CD8-positive, alpha-beta T cell (primary cell): ENCODE measurements at regions of chr1 and their contacts with region 1.

Region 1: GRCh38 chr1:156282479-156283222 is at the start of gene SMG5:
- DNase-seq: peak; percentile 89 to 99 (median 95)
- ATAC-seq: peak; percentile 91
- H3K4me3 ChIP-seq: peak within 1 kb of the TSS; percentile 62 to 80
- H3K4me3 Mint-ChIP-seq: peak within 1 kb of the TSS; percentile 93
- H3K27ac ChIP-seq: peak within 1 kb of the TSS; percentile 38 to 87
- H3K27ac Mint-ChIP-seq: peak within 1 kb of the TSS; percentile 91
- H3K4me1 ChIP-seq: peaks cover 28% of the 10 kb centered on the region
- H3K4me1 Mint-ChIP-seq: peaks cover 38% of the 10 kb centered on the region
- H3K27me3 ChIP-seq: no peaks in the 10 kb centered on the region
- H3K27me3 Mint-ChIP-seq: no peaks in the 10 kb centered on the region
- CTCF ChIP-seq: no peak
- total RNA-seq, gene SMG5: 68.9 to 70.2 TPM

Region 2: GRCh38 chr1:155744711-155745283 is 537.9 kb before region 1 on chr1:
- CTCF ChIA-PET with region 1: no interaction called
- POLR2A ChIA-PET with region 1: no interaction called
- intact Hi-C with region 1: loop called in 1 of 2 experiments (anchors 5 kb)
- DNase-seq: no peak
- ATAC-seq: no peak
- H3K4me3 ChIP-seq: peak overlapping the region; percentile 62 to 86
- H3K4me3 Mint-ChIP-seq: peak overlapping the region; percentile 94
- H3K27ac ChIP-seq: peak overlapping the region; percentile 64 to 70
- H3K27ac Mint-ChIP-seq: peak overlapping the region; percentile 95
- H3K4me1 ChIP-seq: peaks cover 6% of the 10 kb centered on the region
- H3K4me1 Mint-ChIP-seq: peaks cover 3% of the 10 kb centered on the region
- H3K27me3 ChIP-seq: no peaks in the 10 kb centered on the region
- H3K27me3 Mint-ChIP-seq: no peaks in the 10 kb centered on the region
- CTCF ChIP-seq: no peak

Region 3: DNA sequence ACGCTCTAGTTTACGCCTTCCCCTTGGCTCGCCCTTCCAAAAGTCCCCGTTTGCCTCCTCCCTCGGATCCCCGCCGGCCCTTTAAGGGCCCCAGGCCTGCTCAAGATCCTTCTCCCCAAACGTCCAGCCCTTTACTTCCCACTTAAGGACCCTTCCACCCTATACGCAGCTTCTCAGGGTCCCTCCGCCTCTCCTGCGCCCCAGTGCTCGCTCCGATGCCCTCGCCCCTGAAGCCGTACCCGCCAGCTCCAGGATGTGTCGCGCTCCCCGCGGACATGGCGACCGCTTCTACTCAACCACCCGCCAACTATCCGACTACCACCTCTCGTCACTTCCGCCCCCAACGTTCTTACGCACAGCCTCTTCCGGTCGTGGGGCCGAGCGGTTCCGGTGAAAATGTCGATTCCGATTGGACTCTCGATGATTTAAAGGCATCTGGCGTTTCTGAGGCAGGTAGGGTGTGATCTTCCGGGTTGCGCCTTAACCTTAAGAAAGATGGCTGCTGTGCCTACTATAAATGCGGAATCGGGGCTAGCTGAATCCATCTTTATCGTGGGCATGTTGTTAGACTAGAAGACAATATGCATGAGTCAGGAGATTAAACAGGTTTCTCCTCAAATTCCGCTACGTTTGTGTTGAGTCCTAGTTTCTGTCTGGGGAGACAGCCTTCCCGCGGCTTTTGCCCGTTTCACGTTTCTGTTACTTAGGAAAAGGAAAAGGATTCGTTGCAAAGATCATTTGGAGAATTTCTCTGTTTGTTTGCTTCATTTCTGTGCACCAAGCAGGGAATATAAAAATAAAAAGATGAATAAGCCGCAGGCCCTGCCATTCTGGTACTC is 348.3 kb before region 1 on chr1 and contains the start of gene KHDC4:
- CTCF ChIA-PET with region 1: no interaction called
- POLR2A ChIA-PET with region 1: no interaction called
- intact Hi-C with region 1: loop called in 1 of 2 experiments (anchors 1 kb)
- DNase-seq: peak; percentile 88 to 100 (median 93)
- ATAC-seq: peak; percentile 92
- H3K4me3 ChIP-seq: peak within 1 kb of the TSS; percentile 83 to 96
- H3K4me3 Mint-ChIP-seq: no peak within 1 kb of the TSS
- H3K27ac ChIP-seq: peak within 1 kb of the TSS; percentile 89 to 98
- H3K27ac Mint-ChIP-seq: no peak within 1 kb of the TSS
- H3K4me1 ChIP-seq: peaks cover 39% of the 10 kb centered on the region
- H3K4me1 Mint-ChIP-seq: peaks cover 34% of the 10 kb centered on the region
- H3K27me3 ChIP-seq: no peaks in the 10 kb centered on the region
- H3K27me3 Mint-ChIP-seq: no peaks in the 10 kb centered on the region
- CTCF ChIP-seq: peak; percentile 32
- total RNA-seq, gene KHDC4: 47.4 to 54.6 TPM

Region 4: GRCh38 chr1:156082309-156083091 is 200.2 kb before region 1 on chr1 and contains the start of gene MEX3A:
- CTCF ChIA-PET with region 1: no interaction called
- POLR2A ChIA-PET with region 1: no interaction called
- intact Hi-C with region 1: loop called in 1 of 2 experiments (anchors 1 kb)
- DNase-seq: peak in 8 of 9 experiments; percentile 39 to 73 (median 64)
- ATAC-seq: peak; percentile 90
- H3K4me3 ChIP-seq: peak within 1 kb of the TSS; percentile 65 to 88
- H3K4me3 Mint-ChIP-seq: peak within 1 kb of the TSS; percentile 87
- H3K27ac ChIP-seq: no peak within 1 kb of the TSS
- H3K27ac Mint-ChIP-seq: no peak within 1 kb of the TSS
- H3K4me1 ChIP-seq: peaks cover 13% of the 10 kb centered on the region
- H3K4me1 Mint-ChIP-seq: peaks cover 7% of the 10 kb centered on the region
- H3K27me3 ChIP-seq: peaks cover 3 to 25% of the 10 kb centered on the region in 2 experiments
- H3K27me3 Mint-ChIP-seq: peaks cover 29% of the 10 kb centered on the region
- CTCF ChIP-seq: no peak
- total RNA-seq, gene MEX3A: 0.14 to 0.22 TPM

Region 5: GRCh38 chr1:156295391-156295947 is 12.8 kb after region 1 on chr1 and contains the start of gene GLMP:
- CTCF ChIA-PET with region 1: interaction called, 4 read pairs
- POLR2A ChIA-PET with region 1: interaction called, 22 read pairs
- intact Hi-C with region 1: loop called in 1 of 2 experiments (anchors 1 kb)
- DNase-seq: peak; percentile 20 to 77 (median 63)
- ATAC-seq: peak; percentile 89
- H3K4me3 ChIP-seq: peak within 1 kb of the TSS; percentile 67 to 87
- H3K4me3 Mint-ChIP-seq: peak within 1 kb of the TSS; percentile 87
- H3K27ac ChIP-seq: peak within 1 kb of the TSS; percentile 55 to 58
- H3K27ac Mint-ChIP-seq: peak within 1 kb of the TSS; percentile 75
- H3K4me1 ChIP-seq: peaks cover 17% of the 10 kb centered on the region
- H3K4me1 Mint-ChIP-seq: peaks cover 18% of the 10 kb centered on the region
- H3K27me3 ChIP-seq: no peaks in the 10 kb centered on the region
- H3K27me3 Mint-ChIP-seq: no peaks in the 10 kb centered on the region
- CTCF ChIP-seq: no peak
- total RNA-seq, gene GLMP: 10.8 to 10.9 TPM

Region 6: DNA sequence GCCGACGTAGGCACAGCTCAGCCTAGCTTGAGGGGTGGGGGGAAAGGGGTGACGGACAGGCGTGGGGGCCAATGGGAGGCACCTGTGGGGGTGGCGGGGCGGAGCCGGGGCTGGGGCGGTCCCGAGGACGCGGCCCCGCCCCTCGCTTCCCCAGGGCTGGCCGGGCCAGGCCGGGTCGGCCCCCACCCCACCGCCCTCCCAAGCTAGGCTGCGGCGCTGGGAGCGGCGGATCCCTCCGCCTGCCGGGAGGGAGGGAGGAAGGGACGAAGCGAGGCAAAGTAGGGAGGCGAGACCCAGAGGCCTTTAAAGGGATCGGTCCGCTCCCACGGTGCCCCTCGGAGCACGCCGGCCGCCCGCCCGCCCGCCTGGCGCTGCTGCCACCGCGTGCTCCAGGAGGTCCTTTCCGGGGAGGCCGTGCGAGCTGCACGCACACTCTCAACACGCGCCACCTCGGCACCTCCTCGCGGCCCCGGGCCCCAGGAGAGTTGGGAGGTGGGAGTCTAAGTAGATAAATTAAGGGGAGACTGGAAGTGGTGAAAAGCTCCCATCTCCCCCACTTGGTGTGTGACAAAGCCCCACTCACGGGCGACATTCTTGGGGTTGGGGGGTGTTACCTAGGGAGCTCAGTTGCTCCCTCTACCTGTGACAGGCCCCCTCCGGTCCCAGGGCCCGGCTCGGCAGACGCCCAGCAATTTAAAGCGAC is 218.3 kb after region 1 on chr1:
- CTCF ChIA-PET with region 1: no interaction called
- POLR2A ChIA-PET with region 1: interaction called, 3 read pairs
- intact Hi-C with region 1: loop called in 1 of 2 experiments (anchors 5 kb)
- DNase-seq: peak; percentile 86 to 97 (median 94)
- ATAC-seq: peak; percentile 66
- H3K4me3 ChIP-seq: peak overlapping the region; percentile 87 to 92
- H3K4me3 Mint-ChIP-seq: peak overlapping the region; percentile 92
- H3K27ac ChIP-seq: peak overlapping the region; percentile 93 to 97
- H3K27ac Mint-ChIP-seq: peak overlapping the region; percentile 98
- H3K4me1 ChIP-seq: peaks cover 76% of the 10 kb centered on the region
- H3K4me1 Mint-ChIP-seq: peaks cover 76% of the 10 kb centered on the region
- H3K27me3 ChIP-seq: no peaks in the 10 kb centered on the region
- H3K27me3 Mint-ChIP-seq: no peaks in the 10 kb centered on the region
- CTCF ChIP-seq: peak; percentile 68

Region 7: DNA sequence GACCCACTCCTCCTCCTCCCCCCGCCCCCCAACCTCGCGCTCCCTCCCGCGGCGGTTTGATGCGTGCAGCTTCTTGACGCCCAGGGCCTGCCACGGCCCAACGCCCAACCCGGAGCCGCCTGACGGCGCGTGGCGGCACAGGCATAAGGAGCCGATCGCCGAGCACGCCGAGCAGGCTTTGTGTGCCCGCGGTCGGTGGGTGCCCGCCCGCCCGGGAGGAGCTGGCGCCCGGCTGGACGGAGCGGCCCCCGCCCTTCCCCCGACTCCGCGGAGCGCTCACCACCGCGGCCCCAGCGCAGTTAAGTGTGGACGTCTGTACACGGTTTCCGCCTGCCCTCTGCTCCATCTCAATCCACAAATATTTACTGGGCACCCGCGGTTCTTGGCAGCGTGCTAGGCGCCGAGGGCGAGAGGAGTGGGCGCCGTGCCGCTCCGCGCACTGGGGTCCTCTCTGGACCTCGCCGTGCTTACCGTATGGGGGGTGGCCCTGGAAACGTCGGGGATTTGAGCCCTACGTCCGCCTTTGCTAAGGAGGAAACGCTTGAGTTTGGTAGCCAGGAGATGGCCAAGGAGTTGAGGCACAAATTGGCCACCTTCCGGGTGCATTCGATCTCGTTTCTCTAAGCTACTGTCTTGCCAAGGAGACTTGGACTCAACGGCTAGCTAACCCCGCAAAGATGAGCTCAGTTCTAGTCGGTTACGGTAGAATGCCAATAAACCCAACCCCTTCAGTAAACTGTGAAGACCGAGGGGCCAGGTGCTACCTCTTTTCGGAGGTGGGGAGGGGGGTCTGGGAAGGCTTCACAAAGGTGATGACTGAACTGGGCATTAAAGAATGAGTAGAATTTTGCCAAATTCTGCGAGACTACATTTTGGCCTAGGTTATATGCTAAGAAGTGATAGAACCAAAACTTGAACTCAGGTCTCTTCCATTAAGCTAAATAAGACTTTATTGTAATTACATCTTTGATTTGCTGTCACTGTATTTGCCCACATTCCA is 469.4 kb after region 1 on chr1:
- CTCF ChIA-PET with region 1: no interaction called
- POLR2A ChIA-PET with region 1: no interaction called
- intact Hi-C with region 1: loop called in 1 of 2 experiments (anchors 5 kb)
- DNase-seq: peak; percentile 94 to 98 (median 97)
- ATAC-seq: peak; percentile 85
- H3K4me3 ChIP-seq: peak overlapping the region; percentile 89 to 92
- H3K4me3 Mint-ChIP-seq: peak overlapping the region; percentile 89
- H3K27ac ChIP-seq: peak overlapping the region; percentile 65 to 89
- H3K27ac Mint-ChIP-seq: peak overlapping the region; percentile 90
- H3K4me1 ChIP-seq: peaks cover 48% of the 10 kb centered on the region
- H3K4me1 Mint-ChIP-seq: peaks cover 57% of the 10 kb centered on the region
- H3K27me3 ChIP-seq: no peaks in the 10 kb centered on the region
- H3K27me3 Mint-ChIP-seq: no peaks in the 10 kb centered on the region
- CTCF ChIP-seq: no peak